ENCODE measurements at regions of chr15 and their contacts with region 1.

Region 1: GRCh38 chr15:55221090-55222011 is 24.6 kb upstream of the RSL24D1 start:
- DNase-seq: no peak
- ATAC-seq: no peak
- H3K4me3 ChIP-seq: no peak overlapping the region
- H3K27ac ChIP-seq: no peak overlapping the region
- H3K4me1 ChIP-seq: no peaks in the 10 kb centered on the region
- H3K27me3 ChIP-seq: no peaks in the 10 kb centered on the region
- CTCF ChIP-seq: no peak
- POLR2A ChIP-seq: no peak
- RAD21 ChIP-seq: no peak

Region 2: DNA sequence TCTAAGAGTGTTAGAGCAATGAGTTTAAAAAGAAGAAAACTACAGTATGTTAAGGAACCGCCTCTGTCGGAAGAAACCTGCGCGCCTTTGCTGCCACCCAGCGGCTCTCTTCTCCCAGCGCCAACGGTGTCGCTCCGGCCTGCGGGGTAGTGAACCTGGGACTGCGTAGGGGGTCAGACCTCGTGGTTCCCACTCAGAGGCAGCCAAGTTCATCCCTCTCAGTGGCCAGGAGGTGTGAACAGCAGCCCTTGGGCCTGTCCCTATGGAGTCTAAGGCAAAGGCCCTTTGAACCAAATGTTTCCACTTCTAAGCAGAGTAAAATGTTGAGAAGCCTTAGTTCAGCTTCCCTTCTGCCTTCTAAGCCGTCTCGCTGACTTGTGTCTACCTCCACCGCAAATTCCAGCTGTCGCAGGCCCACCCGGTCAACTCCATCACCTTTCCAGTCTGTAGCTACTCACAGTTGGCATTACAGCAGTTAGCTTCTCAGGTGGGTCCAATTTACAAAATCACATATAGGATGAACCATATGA is 69.2 kb after region 1 on chr15:
- CTCF ChIA-PET with region 1: interaction called, 11 read pairs
- POLR2A ChIA-PET with region 1: no interaction called
- RAD21 ChIA-PET with region 1: interaction called, 4 to 9 read pairs
- intact Hi-C with region 1: loop called (anchors 1 kb)
- DNase-seq: peak; percentile 48
- ATAC-seq: peak; percentile 86
- H3K4me3 ChIP-seq: peak overlapping the region; percentile 64 to 83
- H3K27ac ChIP-seq: peak overlapping the region; percentile 58
- H3K4me1 ChIP-seq: peaks cover 3 to 14% of the 10 kb centered on the region in 2 experiments; a peak in 3 of 4 replicates
- H3K27me3 ChIP-seq: no peaks in the 10 kb centered on the region
- CTCF ChIP-seq: peak; percentile 73 to 91 (median 89)
- POLR2A ChIP-seq: no peak
- RAD21 ChIP-seq: peak; percentile 88

Region 3: GRCh38 chr15:55434989-55435825 is 213.9 kb after region 1 on chr15:
- CTCF ChIA-PET with region 1: interaction called, 25 read pairs
- POLR2A ChIA-PET with region 1: interaction called, 4 read pairs
- RAD21 ChIA-PET with region 1: interaction called, 3 to 10 read pairs
- intact Hi-C with region 1: loop called (anchors 1 kb)
- DNase-seq: peak; percentile 42
- ATAC-seq: peak; percentile 85
- H3K4me3 ChIP-seq: no peak overlapping the region
- H3K27ac ChIP-seq: no peak overlapping the region
- H3K4me1 ChIP-seq: no peaks in the 10 kb centered on the region
- H3K27me3 ChIP-seq: no peaks in the 10 kb centered on the region
- CTCF ChIP-seq: peak; percentile 39 to 69 (median 61); a peak in 5 of 6 replicates
- POLR2A ChIP-seq: no peak
- RAD21 ChIP-seq: peak; percentile 65

Region 4: GRCh38 chr15:55637086-55637485 is 415.7 kb after region 1 on chr15:
- CTCF ChIA-PET with region 1: interaction called, 6 read pairs
- POLR2A ChIA-PET with region 1: no interaction called
- RAD21 ChIA-PET with region 1: no interaction called
- intact Hi-C with region 1: loop called (anchors 2 kb)
- DNase-seq: no peak
- ATAC-seq: no peak
- H3K4me3 ChIP-seq: no peak overlapping the region
- H3K27ac ChIP-seq: no peak overlapping the region
- H3K4me1 ChIP-seq: no peaks in the 10 kb centered on the region
- H3K27me3 ChIP-seq: no peaks in the 10 kb centered on the region
- CTCF ChIP-seq: no peak
- POLR2A ChIP-seq: no peak
- RAD21 ChIP-seq: no peak

Region 5: GRCh38 chr15:55681631-55682030 is 460.3 kb after region 1 on chr15:
- CTCF ChIA-PET with region 1: no interaction called
- POLR2A ChIA-PET with region 1: no interaction called
- RAD21 ChIA-PET with region 1: no interaction called
- intact Hi-C with region 1: no loop called
- DNase-seq: no peak
- ATAC-seq: no peak
- H3K4me3 ChIP-seq: no peak overlapping the region
- H3K27ac ChIP-seq: no peak overlapping the region
- H3K4me1 ChIP-seq: no peaks in the 10 kb centered on the region
- H3K27me3 ChIP-seq: no peaks in the 10 kb centered on the region
- CTCF ChIP-seq: no peak
- POLR2A ChIP-seq: no peak
- RAD21 ChIP-seq: no peak